Panc1 (cell line): ENCODE measurements at regions of chr1 and their contacts with region 1.

Region 1: DNA sequence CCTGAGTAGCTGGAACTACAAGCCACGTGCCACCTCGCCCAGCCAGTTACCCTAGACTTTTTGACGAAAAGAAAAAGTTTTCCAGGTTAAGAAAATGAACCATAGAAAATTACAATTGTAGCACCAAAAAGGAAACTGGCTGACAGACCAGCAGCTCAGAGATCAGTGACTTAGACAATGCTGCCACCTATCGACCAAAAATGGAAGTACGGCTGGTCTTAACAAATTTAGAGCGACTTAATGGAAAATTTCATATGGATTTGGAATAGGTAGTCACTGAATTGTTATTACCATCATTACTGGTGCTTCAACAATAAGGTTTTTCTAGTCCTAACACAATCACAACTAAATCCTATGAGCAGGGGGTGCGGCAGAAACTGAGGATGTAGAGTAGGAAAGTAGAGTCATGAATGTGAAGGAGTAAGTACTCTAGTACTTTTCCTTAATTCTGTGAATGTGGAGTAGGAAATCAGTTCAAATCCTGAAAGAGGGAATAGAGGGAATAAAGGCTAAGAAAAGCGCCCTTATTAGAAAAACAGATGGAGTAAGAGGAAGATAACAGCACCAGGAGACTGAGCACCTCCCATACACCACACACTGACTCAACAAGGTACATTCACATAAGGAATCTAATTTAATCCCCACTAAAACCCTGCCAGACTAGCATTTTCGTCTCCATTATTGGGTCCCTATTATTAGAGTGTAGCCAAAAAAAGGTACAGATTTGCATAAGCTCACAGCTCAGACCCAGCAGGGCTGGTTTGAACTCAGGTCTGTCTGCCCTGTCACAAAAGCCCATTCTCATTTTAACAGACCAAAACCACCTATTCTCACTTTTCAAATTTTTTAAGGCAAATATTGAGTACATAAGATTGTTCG is 37.9 kb upstream of the MGST3 start:
- DNase-seq: peak; percentile 73
- ATAC-seq: peak; percentile 69
- H3K4me3 ChIP-seq: no peak overlapping the region
- H3K27ac ChIP-seq: no peak overlapping the region
- H3K4me1 ChIP-seq: no peaks in the 10 kb centered on the region
- H3K27me3 ChIP-seq: peaks cover 19% of the 10 kb centered on the region; the same call in 1 of the 2 replicates
- CTCF ChIP-seq: peak; percentile 87

Region 2: GRCh38 chr1:165144757-165145397 is 448.3 kb before region 1 on chr1:
- CTCF ChIA-PET with region 1: no interaction called
- POLR2A ChIA-PET with region 1: no interaction called
- in situ Hi-C with region 1: no loop called
- intact Hi-C with region 1: loop called (anchors 5 kb)
- DNase-seq: peak; percentile 38
- ATAC-seq: peak; percentile 94
- H3K4me3 ChIP-seq: no peak overlapping the region
- H3K27ac ChIP-seq: no peak overlapping the region
- H3K4me1 ChIP-seq: no peaks in the 10 kb centered on the region
- H3K27me3 ChIP-seq: no peaks in the 10 kb centered on the region; the same call in none of the 2 replicates
- CTCF ChIP-seq: peak; percentile 87

Region 3: DNA sequence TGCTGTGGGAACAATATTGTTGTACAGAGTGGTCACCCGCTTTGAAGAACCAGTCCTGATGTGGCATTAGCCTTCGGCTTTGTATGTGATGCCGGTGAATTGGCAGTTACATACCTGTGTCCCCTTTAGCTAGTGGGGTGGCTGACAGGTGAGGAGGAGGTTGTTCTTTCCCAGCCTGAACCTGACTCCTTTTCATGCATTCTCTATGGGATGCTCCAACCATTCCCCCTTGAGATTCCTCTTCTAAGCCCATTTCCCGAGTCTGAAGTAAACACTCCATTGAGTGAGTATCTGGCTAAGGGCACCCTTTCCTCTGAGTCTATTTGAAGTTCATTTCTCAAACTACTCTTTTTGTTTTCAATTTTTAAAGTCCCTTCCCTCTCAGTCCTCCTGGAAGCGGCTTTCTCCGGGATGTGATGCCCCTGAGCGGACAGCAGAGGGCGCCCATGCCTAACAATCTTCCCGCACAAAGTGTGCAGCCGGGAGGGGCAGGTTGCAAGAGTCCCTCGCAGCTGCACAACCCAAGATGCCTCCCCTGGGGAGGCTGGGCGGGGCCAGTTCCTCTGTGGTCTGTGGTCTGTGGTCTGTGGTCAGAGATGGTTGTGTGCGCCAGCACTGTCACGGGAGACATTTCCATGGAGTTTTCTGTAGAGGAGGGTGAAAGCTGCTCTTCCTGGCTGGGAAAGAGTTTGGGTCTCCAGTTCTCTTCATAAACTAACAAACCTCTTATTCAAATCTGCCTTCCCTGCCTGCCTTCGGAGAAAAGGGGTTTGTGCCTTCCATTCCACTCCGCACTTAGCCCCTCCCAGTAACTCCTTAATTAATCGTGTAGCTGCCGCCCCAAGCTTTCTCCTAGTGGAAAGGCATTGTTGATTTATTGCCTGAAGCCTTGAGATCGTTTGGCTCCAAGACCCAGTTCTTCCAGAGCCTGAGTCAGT is 200.3 kb before region 1 on chr1:
- CTCF ChIA-PET with region 1: interaction called, 5 read pairs
- POLR2A ChIA-PET with region 1: no interaction called
- in situ Hi-C with region 1: no loop called
- intact Hi-C with region 1: loop called (anchors 1 kb)
- DNase-seq: no peak
- ATAC-seq: peak; percentile 95
- H3K4me3 ChIP-seq: no peak overlapping the region
- H3K27ac ChIP-seq: no peak overlapping the region
- H3K4me1 ChIP-seq: peaks cover 4% of the 10 kb centered on the region; the same call in 1 of the 2 replicates
- H3K27me3 ChIP-seq: peaks cover 8% of the 10 kb centered on the region; the same call in 1 of the 2 replicates
- CTCF ChIP-seq: peak; percentile 95

Region 4: DNA sequence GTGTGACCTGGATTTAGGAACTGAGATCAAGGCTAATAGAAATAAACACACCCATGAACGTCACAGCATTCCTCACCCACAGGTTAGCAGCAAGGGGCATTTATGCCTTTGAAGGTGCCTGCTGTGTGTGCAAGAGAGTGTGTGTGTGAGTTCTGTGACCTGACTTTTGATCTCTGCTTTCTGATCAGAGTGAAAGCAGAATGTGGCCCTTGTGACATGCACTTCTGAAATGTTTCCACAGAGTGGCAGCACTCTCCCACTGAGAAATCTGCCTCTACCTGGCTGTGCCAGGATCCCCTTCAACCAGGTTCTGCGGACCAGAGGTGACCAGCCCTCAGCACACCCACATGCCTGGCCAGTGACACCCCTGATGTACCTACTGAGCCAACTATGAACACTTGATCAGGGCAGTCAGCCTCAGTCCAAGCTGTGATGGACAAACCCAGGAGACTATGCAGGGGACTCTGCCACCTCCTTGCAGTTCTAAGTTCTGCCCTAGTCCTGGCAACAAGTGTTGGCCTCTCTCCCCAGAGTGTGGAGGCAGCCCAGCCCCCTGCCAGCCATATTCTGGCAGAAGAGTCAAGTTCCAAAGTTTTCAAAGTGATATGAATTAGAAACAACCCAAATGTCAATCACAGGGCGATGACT is 189.2 kb before region 1 on chr1:
- CTCF ChIA-PET with region 1: no interaction called
- POLR2A ChIA-PET with region 1: no interaction called
- in situ Hi-C with region 1: no loop called
- intact Hi-C with region 1: loop called (anchors 1 kb)
- DNase-seq: no peak
- ATAC-seq: peak; percentile 88
- H3K4me3 ChIP-seq: no peak overlapping the region
- H3K27ac ChIP-seq: no peak overlapping the region
- H3K4me1 ChIP-seq: no peaks in the 10 kb centered on the region
- H3K27me3 ChIP-seq: no peaks in the 10 kb centered on the region
- CTCF ChIP-seq: peak; percentile 77

Region 5: DNA sequence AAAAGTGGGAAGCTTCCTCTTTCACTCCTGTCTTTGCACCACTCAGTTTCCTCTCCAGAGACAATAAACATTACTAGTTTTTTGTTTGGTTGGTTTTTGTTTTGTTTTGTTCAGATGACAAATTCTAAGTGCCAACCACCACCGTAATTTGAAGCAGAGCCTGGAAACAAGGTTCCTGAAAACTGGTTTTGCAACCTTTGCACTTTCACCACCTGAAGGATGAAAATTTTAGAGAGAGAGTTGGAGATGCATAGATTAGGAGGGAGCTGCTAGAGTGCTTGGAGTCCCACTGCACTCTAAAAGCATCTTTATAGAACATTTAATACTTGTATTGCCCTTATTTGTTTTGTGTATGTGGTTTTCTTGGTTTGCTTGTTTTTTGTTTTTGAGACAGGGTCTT is 17.7 kb after region 1 on chr1:
- CTCF ChIA-PET with region 1: no interaction called
- POLR2A ChIA-PET with region 1: no interaction called
- in situ Hi-C with region 1: no loop called
- intact Hi-C with region 1: no loop called
- DNase-seq: no peak
- ATAC-seq: no peak
- H3K4me3 ChIP-seq: no peak overlapping the region
- H3K27ac ChIP-seq: no peak overlapping the region
- H3K4me1 ChIP-seq: no peaks in the 10 kb centered on the region
- H3K27me3 ChIP-seq: peaks cover 4% of the 10 kb centered on the region; the same call in 1 of the 2 replicates
- CTCF ChIP-seq: no peak